ENCODE measurements at regions of chr1 and their contacts with region 1.

Region 1: DNA sequence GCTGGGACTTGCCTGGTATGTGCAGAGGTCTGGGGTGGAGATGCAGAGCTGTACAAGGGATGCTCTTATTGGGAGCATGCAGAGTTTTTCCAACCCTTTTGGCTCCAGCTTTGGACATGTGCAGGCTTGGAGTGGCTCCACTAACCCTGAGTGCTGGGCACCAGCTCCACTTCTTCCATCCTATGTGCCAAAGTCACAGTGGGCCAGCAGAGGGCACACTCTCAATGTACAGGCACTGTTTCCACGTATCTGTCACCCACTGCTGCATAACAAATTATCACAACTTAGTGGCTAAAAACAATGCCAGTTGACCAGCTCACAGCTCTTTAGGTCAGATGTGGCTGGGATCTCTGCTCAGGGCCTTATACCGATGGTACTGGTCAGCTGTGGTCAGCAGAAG is 631.8 kb downstream of the AJAP1 start:
- DNase-seq: peak; percentile 66
- H3K4me3 Mint-ChIP-seq: no peak overlapping the region
- H3K27ac Mint-ChIP-seq: no peak overlapping the region
- H3K4me1 Mint-ChIP-seq: peaks cover 6% of the 10 kb centered on the region
- H3K27me3 Mint-ChIP-seq: no peaks in the 10 kb centered on the region

Region 2: GRCh38 chr1:5161372-5161771 is 124.9 kb before region 1 on chr1:
- CTCF ChIA-PET with region 1: no interaction called
- intact Hi-C with region 1: no loop called
- DNase-seq: peak; percentile 6
- H3K4me3 Mint-ChIP-seq: no peak overlapping the region
- H3K27ac Mint-ChIP-seq: no peak overlapping the region
- H3K4me1 Mint-ChIP-seq: peaks cover 4% of the 10 kb centered on the region
- H3K27me3 Mint-ChIP-seq: peaks cover 15% of the 10 kb centered on the region

Region 3: DNA sequence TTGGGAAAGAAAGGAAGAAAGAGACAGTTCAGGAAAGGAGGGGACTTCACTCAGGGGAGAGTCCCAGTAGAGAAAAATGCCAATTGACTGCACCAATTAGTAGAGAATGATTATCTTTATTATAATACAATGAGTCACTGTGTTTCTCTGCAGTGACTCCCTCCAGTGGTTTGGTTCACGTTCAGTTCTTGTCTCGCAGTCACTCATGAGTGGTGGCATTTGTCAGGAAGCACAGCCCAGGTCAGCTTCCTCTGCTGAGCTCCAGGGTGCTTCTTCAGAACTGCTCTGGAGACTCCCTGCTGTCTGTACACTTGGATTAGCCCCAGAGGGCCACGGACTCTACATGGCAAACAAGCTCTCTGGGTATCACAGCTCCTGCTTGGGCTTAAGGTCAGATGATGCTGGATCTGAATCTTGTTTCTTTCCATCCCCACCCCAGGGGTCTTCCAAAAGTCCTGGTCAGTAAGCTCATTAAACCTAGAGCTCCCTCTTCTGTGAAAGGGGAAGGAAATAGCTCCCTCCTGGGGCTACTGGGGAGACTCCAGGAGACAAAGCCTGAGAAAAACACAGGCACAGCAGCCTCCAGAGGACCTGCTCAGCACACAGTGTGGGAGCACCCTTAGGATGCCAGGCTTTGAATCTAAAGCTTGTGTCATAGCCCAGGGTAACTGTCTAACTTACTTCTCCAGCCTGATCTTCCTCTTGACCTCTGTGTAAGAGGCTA is 12.8 kb before region 1 on chr1:
- CTCF ChIA-PET with region 1: no interaction called
- intact Hi-C with region 1: no loop called
- DNase-seq: peak; percentile 45
- H3K4me3 Mint-ChIP-seq: no peak overlapping the region
- H3K27ac Mint-ChIP-seq: no peak overlapping the region
- H3K4me1 Mint-ChIP-seq: peaks cover 8% of the 10 kb centered on the region
- H3K27me3 Mint-ChIP-seq: no peaks in the 10 kb centered on the region

Region 4: DNA sequence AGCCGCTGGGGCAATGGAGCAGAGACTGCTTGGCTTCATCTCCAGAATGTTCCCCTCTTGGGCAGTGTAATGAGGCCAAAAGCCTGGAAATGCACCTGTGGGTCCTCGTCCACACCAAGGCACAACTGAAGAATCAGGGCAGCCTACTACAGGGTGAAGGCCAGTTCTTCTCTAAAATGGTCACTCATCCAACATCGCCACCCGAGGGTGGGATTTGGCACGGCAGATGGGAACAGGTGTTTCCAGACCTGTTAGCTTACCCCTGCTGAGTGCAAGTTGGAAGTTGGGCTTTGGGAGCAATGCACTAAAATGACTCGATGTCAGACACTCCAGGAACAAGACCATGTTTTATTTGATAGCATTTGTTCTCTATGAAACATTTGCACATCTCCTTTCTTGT is 162.2 kb after region 1 on chr1:
- CTCF ChIA-PET with region 1: interaction called, 3 read pairs
- intact Hi-C with region 1: loop called (anchors 10 kb)
- DNase-seq: peak; percentile 62
- H3K4me3 Mint-ChIP-seq: no peak overlapping the region
- H3K27ac Mint-ChIP-seq: no peak overlapping the region
- H3K4me1 Mint-ChIP-seq: peaks cover 2% of the 10 kb centered on the region
- H3K27me3 Mint-ChIP-seq: no peaks in the 10 kb centered on the region

Region 5: DNA sequence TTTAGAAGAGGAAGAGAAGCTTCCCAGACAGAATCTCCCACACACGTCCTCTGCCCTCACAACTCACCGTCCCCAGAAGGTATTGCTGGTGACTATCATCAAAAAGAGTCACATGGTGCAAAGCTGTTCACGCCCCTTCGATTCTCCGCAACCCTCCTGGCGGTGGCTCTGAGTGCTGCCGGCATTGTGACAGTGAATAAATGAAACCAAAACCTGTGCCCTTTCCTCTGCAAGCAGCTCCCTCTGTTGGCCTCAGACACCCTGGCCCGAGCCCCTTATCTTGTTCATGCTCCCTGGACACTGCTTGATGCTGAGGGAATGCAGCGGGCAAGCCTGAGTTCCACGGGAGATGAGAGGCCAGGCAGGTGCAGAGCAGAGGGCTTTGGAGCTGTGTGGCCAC is 195.6 kb after region 1 on chr1:
- CTCF ChIA-PET with region 1: no interaction called
- intact Hi-C with region 1: loop called (anchors 2 kb)
- DNase-seq: peak; percentile 56
- H3K4me3 Mint-ChIP-seq: no peak overlapping the region
- H3K27ac Mint-ChIP-seq: no peak overlapping the region
- H3K4me1 Mint-ChIP-seq: peaks cover 6% of the 10 kb centered on the region
- H3K27me3 Mint-ChIP-seq: no peaks in the 10 kb centered on the region

Measured in activated naive CD4-positive, alpha-beta T cell treated with anti-CD3 and anti-CD28 coated beads for 36 hours (primary cell).